ENCODE measurements at regions of chr19 and their contacts with region 1.

Region 1: GRCh38 chr19:36257520-36257876 is 42.6 kb downstream of the ZNF146 start:
- DNase-seq: peak; percentile 26
- H3K4me3 ChIP-seq: peak overlapping the region; percentile 72
- H3K27ac ChIP-seq: no peak overlapping the region
- H3K4me1 ChIP-seq: no peaks in the 10 kb centered on the region
- H3K27me3 ChIP-seq: no peaks in the 10 kb centered on the region

Region 2: DNA sequence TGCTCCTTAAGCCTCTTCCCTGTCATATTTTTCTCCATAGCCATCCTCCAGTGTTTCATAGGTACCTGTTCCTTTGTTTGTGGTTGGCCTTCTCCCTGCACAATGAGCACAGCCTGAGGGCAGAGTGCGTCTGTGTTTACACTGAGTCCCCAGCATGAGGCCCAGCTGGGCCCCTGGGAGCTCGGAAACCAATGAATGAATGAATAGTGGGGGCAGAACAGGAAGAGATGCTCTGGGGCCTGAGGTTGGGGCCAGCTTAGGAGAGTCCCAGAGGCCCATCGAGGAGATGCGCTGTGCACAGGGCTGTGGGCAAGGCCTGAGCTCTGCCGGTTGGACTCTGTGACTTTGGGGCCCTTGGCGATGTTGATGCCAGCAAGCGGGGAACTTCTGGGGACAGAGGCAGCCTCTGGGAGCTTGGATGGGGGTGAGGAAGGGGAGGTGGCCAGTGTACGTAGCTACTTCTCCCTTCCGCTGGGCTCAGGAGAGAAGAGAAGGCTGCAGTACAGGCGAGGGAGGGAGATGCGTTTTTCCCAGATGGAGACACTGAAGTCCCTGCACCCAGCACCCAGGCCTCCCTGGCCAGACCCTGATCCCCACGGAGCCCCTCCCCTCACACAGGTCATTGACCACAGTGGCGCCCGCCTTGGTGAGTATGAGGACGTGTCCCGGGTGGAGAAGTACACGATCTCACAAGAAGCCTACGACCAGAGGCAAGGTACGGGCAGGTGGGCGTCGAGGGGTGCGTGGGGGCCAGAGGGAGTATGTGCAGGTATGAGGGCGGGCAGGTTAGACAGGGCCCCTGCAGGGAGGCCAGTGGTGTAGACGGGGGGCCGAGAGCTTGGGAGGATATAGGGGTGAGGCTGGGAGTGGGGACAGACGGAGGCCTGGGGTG is 137.2 kb before region 1 on chr19:
- in situ Hi-C with region 1: no loop called
- DNase-seq: no peak
- H3K4me3 ChIP-seq: no peak overlapping the region
- H3K27ac ChIP-seq: no peak overlapping the region
- H3K4me1 ChIP-seq: peaks cover 7% of the 10 kb centered on the region; the same call in 1 of the 2 replicates
- H3K27me3 ChIP-seq: no peaks in the 10 kb centered on the region

Region 3: DNA sequence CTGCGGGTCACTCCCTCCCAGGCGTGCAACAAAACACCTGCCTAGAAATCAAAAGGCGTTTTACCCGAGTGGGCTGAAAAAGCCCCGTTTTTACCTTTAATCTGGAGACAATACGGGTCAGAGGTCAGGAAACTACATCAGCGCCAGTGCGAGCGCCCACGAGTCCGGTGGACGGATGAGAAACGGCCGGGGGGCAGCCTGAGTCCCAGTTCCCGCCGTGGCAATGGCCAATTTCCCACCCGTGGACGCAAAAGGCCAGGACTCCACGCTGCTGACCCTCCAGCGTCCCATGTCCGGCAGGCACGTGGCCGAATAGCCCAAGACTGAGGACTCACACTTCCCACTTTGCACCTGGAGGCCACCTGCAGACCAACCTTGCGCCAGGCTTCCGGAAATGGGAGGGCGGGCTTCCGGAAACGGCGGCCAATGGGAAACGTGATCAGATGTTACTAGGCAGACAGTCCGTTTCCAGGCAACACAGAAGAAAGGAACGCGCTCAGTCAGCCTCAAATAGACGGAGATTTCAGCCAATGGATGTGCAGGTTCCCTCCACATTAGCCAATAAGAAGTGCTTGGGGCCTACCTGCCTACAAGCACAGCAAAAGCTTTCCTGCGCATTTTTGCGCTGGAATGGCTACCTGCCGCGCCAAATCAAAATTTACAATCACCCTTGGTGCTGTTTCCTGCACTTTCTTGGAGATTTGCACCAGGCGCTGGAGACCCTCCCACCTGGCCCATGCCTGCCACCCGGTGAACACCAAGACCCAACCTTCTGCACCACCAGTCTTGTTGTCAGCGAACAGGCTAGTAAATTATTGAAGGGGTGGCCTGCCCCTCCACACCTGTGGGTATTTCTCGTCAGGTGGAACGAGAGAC is 74.1 kb after region 1 on chr19:
- in situ Hi-C with region 1: loop called (anchors 10 kb)
- DNase-seq: peak; percentile 97
- H3K4me3 ChIP-seq: peak overlapping the region; percentile 88
- H3K27ac ChIP-seq: no peak overlapping the region
- H3K4me1 ChIP-seq: peaks cover 7% of the 10 kb centered on the region; the same call in 1 of the 2 replicates
- H3K27me3 ChIP-seq: no peaks in the 10 kb centered on the region